Vagina (tissue), 2 donors: ENCODE measurements at regions of chr22 and their contacts with region 1.

Region 1: GRCh38 chr22:44489817-44490216 is 8.2 kb downstream of the RTL6 start:
- DNase-seq: no peak
- H3K4me3 ChIP-seq: no peak overlapping the region
- H3K27ac ChIP-seq: no peak overlapping the region
- H3K4me1 ChIP-seq: no peaks in the 10 kb centered on the region
- H3K27me3 ChIP-seq: no peaks in the 10 kb centered on the region
- CTCF ChIP-seq: no peak
- POLR2A ChIP-seq: no peak

Region 2: DNA sequence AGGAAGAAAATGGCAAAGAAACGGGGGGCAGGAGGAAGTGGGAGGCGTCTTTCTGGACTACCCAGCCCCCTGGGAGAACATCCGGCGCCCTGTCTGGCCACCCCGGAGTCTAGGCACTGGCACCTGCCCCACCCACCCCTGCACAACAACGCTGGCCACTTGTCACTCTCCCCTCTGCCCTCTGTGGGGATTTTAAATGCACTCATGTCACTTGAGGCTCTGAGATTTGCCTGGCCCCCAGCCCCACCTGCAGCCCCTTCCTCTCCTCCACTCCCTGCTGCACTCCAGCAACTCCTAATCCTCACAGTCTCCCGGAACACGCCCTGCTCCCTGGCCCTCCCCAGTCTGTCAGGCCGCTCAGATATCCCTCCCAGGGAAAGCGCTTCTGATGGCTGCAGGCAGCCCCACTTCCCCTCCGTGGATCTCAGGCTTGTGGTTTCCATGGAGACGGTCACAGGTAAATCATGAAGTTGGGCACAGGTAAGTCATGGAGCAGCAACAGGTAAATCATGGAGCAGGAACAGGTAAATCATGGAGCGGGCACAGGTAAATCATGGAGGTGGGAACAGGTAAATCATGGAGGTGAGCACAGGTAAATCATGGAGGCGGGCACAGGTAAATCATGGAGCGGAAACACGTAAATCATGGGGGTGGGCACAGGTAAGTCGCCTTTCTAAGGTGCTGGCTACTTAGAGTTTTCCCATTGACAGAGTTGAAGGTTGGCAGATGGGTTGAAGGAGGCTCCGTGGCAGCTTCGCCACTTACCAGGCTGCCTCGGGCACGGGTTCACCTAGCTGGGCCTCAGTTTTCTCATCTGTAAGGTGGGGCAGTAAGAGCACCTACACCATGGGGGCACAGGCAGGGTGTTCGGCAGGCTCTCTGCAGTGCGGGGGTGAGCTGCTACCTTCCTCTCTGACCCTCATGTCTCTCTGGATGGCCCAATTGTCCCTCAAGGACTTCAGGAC is 98.1 kb before region 1 on chr22:
- intact Hi-C with region 1: no loop called
- DNase-seq: no peak
- H3K4me3 ChIP-seq: no peak overlapping the region
- H3K27ac ChIP-seq: no peak overlapping the region
- H3K4me1 ChIP-seq: no peaks in the 10 kb centered on the region
- H3K27me3 ChIP-seq: no peaks in the 10 kb centered on the region
- CTCF ChIP-seq: no peak
- POLR2A ChIP-seq: no peak

Region 3: DNA sequence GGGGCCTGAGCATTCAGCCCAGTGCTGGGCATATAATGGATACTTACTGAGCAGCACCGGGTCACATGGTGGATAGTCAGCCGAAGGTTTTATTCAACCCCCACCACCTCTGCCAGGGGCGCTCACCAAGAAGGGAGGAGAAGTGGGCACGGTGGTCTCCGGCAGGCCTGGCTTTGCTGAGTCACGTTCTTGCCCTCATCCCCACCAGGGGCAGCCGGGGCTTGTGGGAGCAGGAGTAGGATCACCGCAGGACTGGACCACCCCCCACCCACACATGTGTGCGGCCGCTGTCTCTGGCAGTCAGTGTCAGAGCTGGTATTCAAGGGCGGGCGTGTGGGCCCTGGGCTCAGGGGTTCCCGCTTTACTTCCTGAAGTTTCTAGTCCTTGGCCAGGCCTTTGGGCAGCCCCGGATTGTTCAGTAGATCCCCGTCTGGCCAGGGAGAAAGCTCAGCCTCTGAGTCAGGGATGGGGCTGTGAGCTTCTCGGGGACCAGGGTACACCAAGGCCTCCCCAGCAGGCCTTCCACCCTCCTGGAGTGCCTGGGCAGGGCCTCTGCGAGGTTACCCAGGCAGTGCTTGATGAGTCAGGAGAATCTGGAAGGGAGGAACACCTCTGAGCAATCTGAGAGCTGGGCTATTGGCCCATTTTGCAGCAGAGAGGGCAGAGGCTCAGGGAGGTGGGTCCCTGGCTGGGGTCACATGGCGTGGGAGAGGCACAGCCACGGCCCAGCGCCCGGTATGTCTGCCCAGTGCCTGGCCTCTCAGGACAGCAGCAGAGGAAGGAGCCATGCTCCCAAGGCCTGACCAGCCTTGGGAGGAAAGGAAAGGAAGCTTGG is 52.4 kb before region 1 on chr22:
- intact Hi-C with region 1: loop called (anchors 2 kb)
- DNase-seq: no peak
- H3K4me3 ChIP-seq: no peak overlapping the region
- H3K27ac ChIP-seq: no peak overlapping the region
- H3K4me1 ChIP-seq: no peaks in the 10 kb centered on the region
- H3K27me3 ChIP-seq: no peaks in the 10 kb centered on the region
- CTCF ChIP-seq: no peak
- POLR2A ChIP-seq: no peak